Esophagus squamous epithelium (tissue), 5 donors: ENCODE measurements at regions of chr17 and their contacts with region 1.

Region 1: GRCh38 chr17:75319904-75320691 is 30.9 kb upstream of the SLC25A19 start:
- DNase-seq: no peak
- H3K4me3 ChIP-seq: no peak overlapping the region
- H3K27ac ChIP-seq: peak overlapping the region in 1 of 4 donors; percentile 26
- H3K4me1 ChIP-seq: peaks cover 3 to 23% (median 5%) of the 10 kb centered on the region in 3 donors
- H3K27me3 ChIP-seq: no peaks in the 10 kb centered on the region
- CTCF ChIP-seq: no peak
- POLR2A ChIP-seq: peak in 1 of 4 donors; percentile 6

Region 2: DNA sequence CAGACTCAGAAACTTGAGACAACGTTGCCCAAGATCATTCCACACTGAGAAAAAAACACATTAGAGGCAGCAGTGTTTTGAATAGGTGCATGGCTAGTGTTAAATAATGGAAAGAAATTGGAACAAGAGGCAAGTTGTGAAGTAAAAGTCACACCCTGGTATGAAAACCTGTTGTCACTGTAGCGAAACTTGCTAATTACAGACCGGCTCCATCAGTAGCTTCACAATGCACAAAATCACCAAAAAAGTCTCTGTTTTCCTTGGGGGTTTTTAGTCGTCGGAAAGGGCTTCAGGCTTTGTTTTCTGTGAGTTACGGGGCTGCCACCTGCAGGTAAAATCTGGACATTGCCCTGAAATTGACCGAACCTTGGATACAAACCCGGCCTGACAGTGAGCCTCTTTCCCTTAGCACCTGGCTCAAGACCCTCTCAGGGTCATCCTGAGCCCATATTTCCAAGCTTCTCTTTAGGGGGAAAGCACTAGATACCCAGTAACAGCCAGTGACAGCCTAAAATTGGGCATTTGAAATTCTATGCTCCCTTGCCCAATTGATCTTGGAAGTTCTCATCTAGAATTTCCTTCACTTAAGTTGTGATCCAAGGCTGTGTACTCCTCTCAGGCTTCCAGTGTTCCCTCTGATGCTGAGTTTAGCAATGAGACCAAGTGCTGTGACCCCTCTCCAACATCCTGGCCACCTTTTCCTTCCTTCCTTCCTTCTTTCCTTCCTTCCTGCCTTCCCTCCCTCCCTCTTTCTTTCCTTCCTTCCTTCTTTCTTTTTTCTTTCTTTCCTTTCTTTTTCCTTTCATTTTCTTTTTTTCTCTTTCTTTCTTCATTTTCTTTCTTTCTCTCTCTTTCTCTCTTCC is 92.6 kb after region 1 on chr17:
- intact Hi-C with region 1: loop called (anchors 5 kb)
- DNase-seq: no peak
- H3K4me3 ChIP-seq: peak overlapping the region in 3 of 4 donors; percentile 2 to 54 (median 15)
- H3K27ac ChIP-seq: peak overlapping the region in 1 of 4 donors; percentile 30
- H3K4me1 ChIP-seq: peaks cover 0 to 9% (median 0%) of the 10 kb centered on the region in 3 donors
- H3K27me3 ChIP-seq: no peaks in the 10 kb centered on the region
- CTCF ChIP-seq: peak; percentile 50 to 91 (median 80)
- POLR2A ChIP-seq: no peak

Region 3: GRCh38 chr17:75504347-75504964 is 184.4 kb after region 1 on chr17:
- intact Hi-C with region 1: loop called (anchors 10 kb)
- DNase-seq: no peak
- H3K4me3 ChIP-seq: no peak overlapping the region
- H3K27ac ChIP-seq: peak overlapping the region in 2 of 4 donors; percentile 5 to 17
- H3K4me1 ChIP-seq: peaks cover 0 to 63% (median 7%) of the 10 kb centered on the region in 3 donors
- H3K27me3 ChIP-seq: no peaks in the 10 kb centered on the region
- CTCF ChIP-seq: peak in 5 of 6 experiments; percentile 47 to 72 (median 55)
- POLR2A ChIP-seq: no peak